G401 (cell line): ENCODE measurements at regions of chr7 and their contacts with region 1.

Region 1: DNA sequence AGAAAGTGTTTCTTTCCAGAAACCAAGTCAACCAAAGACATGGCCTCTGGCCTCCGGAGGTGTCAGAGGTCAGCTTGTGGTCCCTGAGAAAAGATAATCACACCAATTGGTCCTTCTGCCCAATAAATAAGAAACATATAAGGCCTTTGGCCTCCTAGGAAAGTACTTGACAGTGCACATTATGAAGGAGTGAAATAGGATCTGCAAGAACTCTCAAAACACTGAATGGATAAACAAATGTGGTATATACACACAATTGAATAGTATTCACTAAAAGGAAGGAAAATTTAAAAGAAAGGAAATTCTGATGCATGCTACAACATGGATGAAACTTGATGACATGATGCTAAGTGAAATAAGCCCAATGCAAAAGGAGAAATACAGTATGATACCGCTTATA is 35.4 kb upstream of the NRF1 start:
- DNase-seq: no peak

Region 2: GRCh38 chr7:129468087-129468486 is 108.1 kb before region 1 on chr7:
- in situ Hi-C with region 1: no loop called
- DNase-seq: no peak

Region 3: GRCh38 chr7:129615018-129615417 is 38.9 kb after region 1 on chr7:
- in situ Hi-C with region 1: loop called (anchors 5 kb)
- DNase-seq: no peak